Activated CD4-positive, alpha-beta memory T cell treated with anti-CD3 and anti-CD28 coated beads for 36 hours (primary cell): ENCODE measurements at regions of chr7 and their contacts with region 1.

Region 1: DNA sequence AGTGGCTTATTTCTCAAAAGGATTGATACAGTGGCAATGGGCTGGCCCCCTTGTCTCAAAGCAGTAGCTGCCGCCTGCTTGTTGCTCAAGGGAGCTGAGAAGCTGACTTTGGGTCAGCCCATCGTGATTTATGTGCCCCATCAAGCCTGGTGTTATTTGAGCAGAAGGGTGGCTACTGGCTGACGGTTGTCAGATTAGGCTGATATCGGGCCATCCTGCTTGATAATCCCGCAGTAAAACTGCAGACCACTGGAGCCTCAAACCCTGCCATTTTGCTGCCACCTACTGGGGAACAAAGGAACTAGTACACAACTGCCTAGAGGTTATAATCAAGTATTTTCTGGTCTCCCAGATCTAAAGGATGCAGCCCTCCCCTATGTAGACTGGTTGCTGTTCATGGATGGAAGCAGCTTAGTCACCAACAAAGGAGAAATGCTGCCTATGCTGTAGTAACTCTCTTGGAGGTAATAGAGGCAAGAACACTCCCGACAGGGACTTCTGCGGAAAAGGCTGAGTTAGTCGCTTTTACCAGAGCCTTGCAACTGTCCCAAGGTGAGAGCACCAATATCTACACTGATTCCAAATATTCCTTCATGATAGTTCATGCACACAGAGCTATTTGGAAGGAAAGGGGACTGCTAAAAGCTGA is 65.9 kb upstream of the ZNF92 start:
- DNase-seq: peak; percentile 43
- H3K4me3 Mint-ChIP-seq: no peak overlapping the region
- H3K27ac Mint-ChIP-seq: no peak overlapping the region
- H3K4me1 Mint-ChIP-seq: no peaks in the 10 kb centered on the region
- H3K27me3 Mint-ChIP-seq: no peaks in the 10 kb centered on the region

Region 2: GRCh38 chr7:64951250-64951848 is 356.4 kb before region 1 on chr7:
- CTCF ChIA-PET with region 1: interaction called, 43 read pairs
- POLR2A ChIA-PET with region 1: no interaction called
- intact Hi-C with region 1: loop called (anchors 1 kb)
- DNase-seq: no peak
- H3K4me3 Mint-ChIP-seq: no peak overlapping the region
- H3K27ac Mint-ChIP-seq: no peak overlapping the region
- H3K4me1 Mint-ChIP-seq: no peaks in the 10 kb centered on the region
- H3K27me3 Mint-ChIP-seq: peaks cover 23% of the 10 kb centered on the region

Region 3: GRCh38 chr7:65216459-65216858 is 91.3 kb before region 1 on chr7:
- CTCF ChIA-PET with region 1: interaction called, 68 read pairs
- POLR2A ChIA-PET with region 1: no interaction called
- intact Hi-C with region 1: loop called (anchors 1 kb)
- DNase-seq: peak; percentile 67
- H3K4me3 Mint-ChIP-seq: no peak overlapping the region
- H3K27ac Mint-ChIP-seq: no peak overlapping the region
- H3K4me1 Mint-ChIP-seq: no peaks in the 10 kb centered on the region
- H3K27me3 Mint-ChIP-seq: peaks cover 2% of the 10 kb centered on the region

Region 4: DNA sequence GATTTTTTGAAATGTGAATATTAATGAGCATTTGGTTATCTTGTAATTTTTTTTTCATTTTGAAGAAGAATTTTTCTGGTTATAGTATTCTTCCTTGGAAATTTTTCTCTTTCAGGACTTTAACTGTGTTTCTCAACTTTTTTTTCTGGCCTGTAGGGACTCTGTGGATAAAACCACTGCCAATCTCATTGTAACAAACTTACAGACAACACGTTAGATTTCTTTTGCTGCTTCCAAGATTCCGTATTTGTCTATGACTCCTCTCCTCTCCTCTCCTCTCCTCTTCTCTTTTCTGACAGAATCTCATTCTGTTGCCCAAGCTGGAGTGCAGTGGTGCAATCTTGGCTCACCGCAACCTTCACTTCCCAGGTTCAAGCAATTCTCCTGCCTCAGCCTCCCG is 46.5 kb after region 1 on chr7:
- CTCF ChIA-PET with region 1: no interaction called
- POLR2A ChIA-PET with region 1: no interaction called
- intact Hi-C with region 1: no loop called
- DNase-seq: no peak
- H3K4me3 Mint-ChIP-seq: no peak overlapping the region
- H3K27ac Mint-ChIP-seq: no peak overlapping the region
- H3K4me1 Mint-ChIP-seq: no peaks in the 10 kb centered on the region
- H3K27me3 Mint-ChIP-seq: peaks cover 7% of the 10 kb centered on the region

Region 5: GRCh38 chr7:66150471-66150870 is 842.7 kb after region 1 on chr7:
- CTCF ChIA-PET with region 1: no interaction called
- POLR2A ChIA-PET with region 1: no interaction called
- intact Hi-C with region 1: no loop called
- DNase-seq: no peak
- H3K4me3 Mint-ChIP-seq: no peak overlapping the region
- H3K27ac Mint-ChIP-seq: no peak overlapping the region
- H3K4me1 Mint-ChIP-seq: peaks cover 24% of the 10 kb centered on the region
- H3K27me3 Mint-ChIP-seq: no peaks in the 10 kb centered on the region